CD14-positive monocyte (primary cell): ENCODE measurements at regions of chr15 and their contacts with region 1.

Region 1: GRCh38 chr15:31215490-31216214 is 111.0 kb upstream of the KLF13 start:
- DNase-seq: peak; percentile 82 to 85 (median 83)
- H3K4me3 ChIP-seq: peak overlapping the region; percentile 33 to 72 (median 44)
- H3K4me3 Mint-ChIP-seq: peak overlapping the region; percentile 80 to 83
- H3K27ac ChIP-seq: peak overlapping the region; percentile 91 to 93
- H3K27ac Mint-ChIP-seq: peak overlapping the region; percentile 90 to 98 (median 96)
- H3K4me1 ChIP-seq: peaks cover 68 to 81% of the 10 kb centered on the region in 2 donors
- H3K4me1 Mint-ChIP-seq: peaks cover 80% of the 10 kb centered on the region
- H3K27me3 ChIP-seq: no peaks in the 10 kb centered on the region
- H3K27me3 Mint-ChIP-seq: peaks cover 0 to 3% (median 0%) of the 10 kb centered on the region in 3 donors
- CTCF ChIP-seq: peak; percentile 98

Region 2: GRCh38 chr15:31136016-31136415 is 79.6 kb before region 1 on chr15:
- intact Hi-C with region 1: no loop called
- DNase-seq: no peak
- H3K4me3 ChIP-seq: no peak overlapping the region
- H3K4me3 Mint-ChIP-seq: no peak overlapping the region
- H3K27ac ChIP-seq: no peak overlapping the region
- H3K27ac Mint-ChIP-seq: peak overlapping the region in 1 of 7 donors; percentile 14
- H3K4me1 ChIP-seq: no peaks in the 10 kb centered on the region
- H3K4me1 Mint-ChIP-seq: peaks cover 2% of the 10 kb centered on the region
- H3K27me3 ChIP-seq: no peaks in the 10 kb centered on the region
- H3K27me3 Mint-ChIP-seq: peaks cover 0 to 2% (median 0%) of the 10 kb centered on the region in 3 donors
- CTCF ChIP-seq: no peak

Region 3: DNA sequence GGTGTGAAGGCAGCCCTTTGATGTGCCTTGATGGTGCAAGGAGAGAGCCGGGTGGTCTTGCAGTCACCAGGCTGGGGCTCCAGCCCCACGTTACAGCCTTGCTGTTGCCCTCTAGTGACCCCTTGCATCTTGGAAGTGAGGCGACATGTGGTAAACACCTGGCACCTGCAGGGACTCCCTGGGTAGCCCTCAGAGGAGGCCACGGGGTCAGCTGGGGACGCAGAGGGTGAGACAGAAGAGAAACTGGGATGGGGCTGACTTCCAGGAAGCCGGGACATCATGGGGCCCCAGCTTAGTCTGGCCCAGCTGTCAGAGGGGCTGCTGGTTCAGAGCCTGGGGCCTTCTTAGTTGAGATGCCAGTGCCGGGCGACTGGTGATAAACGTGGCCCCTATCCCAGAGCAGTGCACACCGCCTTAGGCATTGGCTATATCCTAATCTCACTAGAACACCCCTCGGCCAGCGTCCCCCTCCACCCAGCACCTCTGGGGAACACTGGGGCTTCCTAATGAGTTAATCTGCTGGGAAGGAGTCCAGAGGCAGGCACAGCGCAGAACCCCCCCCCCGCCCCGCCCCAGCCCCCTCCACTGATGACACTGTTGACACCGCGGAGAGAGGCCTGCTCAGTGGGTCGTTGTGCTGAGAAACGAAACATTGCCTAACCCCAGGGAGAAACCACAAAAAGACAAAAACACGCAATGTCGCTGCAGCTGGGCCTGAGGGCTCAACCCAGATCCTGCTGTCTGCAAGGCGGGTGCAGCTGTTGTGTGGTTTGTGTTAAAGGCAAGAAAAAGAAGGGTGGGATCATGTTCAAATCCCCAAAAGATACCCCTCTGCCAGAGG is 50.4 kb after region 1 on chr15:
- intact Hi-C with region 1: loop called (anchors 1 to 2 kb)
- DNase-seq: peak; percentile 93 to 95 (median 95)
- H3K4me3 ChIP-seq: peak overlapping the region in 1 of 3 experiments; percentile 45
- H3K4me3 Mint-ChIP-seq: peak overlapping the region; percentile 55 to 64
- H3K27ac ChIP-seq: peak overlapping the region; percentile 96 to 99
- H3K27ac Mint-ChIP-seq: peak overlapping the region; percentile 99 to 100 (median 100)
- H3K4me1 ChIP-seq: peaks cover 99 to 100% of the 10 kb centered on the region in 2 donors
- H3K4me1 Mint-ChIP-seq: peaks cover 99% of the 10 kb centered on the region
- H3K27me3 ChIP-seq: no peaks in the 10 kb centered on the region
- H3K27me3 Mint-ChIP-seq: no peaks in the 10 kb centered on the region
- CTCF ChIP-seq: no peak

Region 4: DNA sequence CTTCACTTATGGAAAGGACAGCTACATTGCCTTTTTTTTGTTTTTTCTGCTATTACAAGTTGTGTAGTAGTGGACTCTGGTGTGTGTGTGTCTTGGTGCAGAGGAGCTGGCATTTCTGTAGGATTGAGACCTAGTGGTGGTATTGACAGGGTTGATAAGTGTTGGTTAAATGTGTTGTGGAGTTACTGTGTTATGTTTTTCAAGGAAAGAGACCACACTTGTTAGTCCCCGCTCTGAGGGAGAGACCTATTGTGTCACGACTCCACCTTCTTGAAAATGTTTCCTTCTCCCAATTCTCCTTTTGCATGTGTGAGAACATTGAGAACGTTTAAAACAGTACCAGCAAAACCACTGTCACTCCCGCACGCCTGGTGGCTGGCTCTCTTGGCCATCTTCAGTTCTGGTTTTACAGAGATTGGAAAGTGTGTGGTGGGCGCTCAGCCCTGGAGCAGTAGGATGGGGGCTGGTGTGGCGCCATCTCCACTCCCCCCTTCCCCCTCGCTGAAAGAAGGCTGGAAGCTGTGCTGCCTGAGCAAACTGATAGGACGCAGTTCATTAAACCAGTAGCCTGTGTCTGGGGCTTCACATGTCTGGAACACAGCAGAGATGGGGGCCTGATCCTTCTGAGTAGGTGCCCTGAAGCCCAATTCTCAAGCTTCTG is 116.5 kb after region 1 on chr15:
- intact Hi-C with region 1: no loop called
- DNase-seq: no peak
- H3K4me3 ChIP-seq: peak overlapping the region in 1 of 3 experiments; percentile 99
- H3K4me3 Mint-ChIP-seq: peak overlapping the region; percentile 70 to 94
- H3K27ac ChIP-seq: peak overlapping the region in 1 of 2 donors; percentile 91
- H3K27ac Mint-ChIP-seq: peak overlapping the region; percentile 13 to 86 (median 69)
- H3K4me1 ChIP-seq: peaks cover 79 to 84% of the 10 kb centered on the region in 2 donors
- H3K4me1 Mint-ChIP-seq: peaks cover 85% of the 10 kb centered on the region
- H3K27me3 ChIP-seq: no peaks in the 10 kb centered on the region
- H3K27me3 Mint-ChIP-seq: peaks cover 0 to 3% (median 0%) of the 10 kb centered on the region in 3 donors
- CTCF ChIP-seq: no peak

Region 5: DNA sequence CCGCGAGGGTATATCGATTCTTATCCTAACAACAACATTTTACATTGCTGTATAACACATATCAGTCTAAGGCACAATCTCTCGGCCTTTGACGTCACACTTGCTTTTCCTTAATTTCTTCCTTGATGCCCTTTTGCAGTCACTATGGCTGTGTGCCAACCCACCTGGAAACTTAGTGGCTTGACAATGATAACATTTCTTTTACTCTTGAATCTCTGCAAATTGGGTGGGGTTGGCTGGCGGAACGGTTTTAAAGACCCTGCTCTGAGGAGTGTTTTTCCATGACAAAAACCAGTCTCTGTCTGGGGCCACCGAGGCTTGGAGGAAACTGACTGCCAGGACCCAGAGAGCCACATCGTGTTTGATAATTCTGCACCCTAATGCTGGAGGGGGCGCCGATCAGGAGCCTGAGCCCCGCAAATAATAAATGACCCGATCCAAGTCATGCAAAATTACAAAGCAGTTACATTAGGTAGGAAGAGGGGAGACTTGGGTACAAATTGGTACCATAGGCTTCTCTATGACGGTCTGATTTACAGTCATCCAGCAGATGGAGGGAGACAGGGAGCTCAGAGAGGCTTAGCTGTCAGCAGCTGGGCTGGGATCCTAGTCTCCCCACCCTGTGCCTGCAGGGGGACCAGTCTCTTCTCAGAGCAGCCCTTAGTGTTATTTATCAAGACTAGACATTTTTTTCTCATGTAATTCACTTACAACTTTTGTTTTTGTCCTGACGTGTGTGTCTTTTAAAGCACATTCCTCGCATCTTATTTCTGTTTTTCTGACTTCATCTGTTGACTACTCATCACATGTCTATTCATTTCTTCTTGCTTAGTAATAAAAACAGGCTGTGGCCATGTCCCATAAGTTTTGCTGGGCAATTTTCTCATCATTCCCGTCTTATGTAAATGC is 226.8 kb after region 1 on chr15:
- intact Hi-C with region 1: loop called in 1 of 2 experiments (anchors 5 kb)
- DNase-seq: no peak
- H3K4me3 ChIP-seq: no peak overlapping the region
- H3K4me3 Mint-ChIP-seq: no peak overlapping the region
- H3K27ac ChIP-seq: no peak overlapping the region
- H3K27ac Mint-ChIP-seq: peak overlapping the region; percentile 82 to 97 (median 91)
- H3K4me1 ChIP-seq: peaks cover 27 to 42% of the 10 kb centered on the region in 2 donors
- H3K4me1 Mint-ChIP-seq: peaks cover 38% of the 10 kb centered on the region
- H3K27me3 ChIP-seq: no peaks in the 10 kb centered on the region
- H3K27me3 Mint-ChIP-seq: peaks cover 3 to 7% (median 5%) of the 10 kb centered on the region in 3 donors
- CTCF ChIP-seq: no peak